ENCODE measurements at regions of chr2 and their contacts with region 1.

Region 1: GRCh38 chr2:157327621-157328500 is 2.2 kb upstream of the ERMN start:
- DNase-seq: peak; percentile 72
- H3K4me3 Mint-ChIP-seq: no peak overlapping the region
- H3K27ac Mint-ChIP-seq: no peak overlapping the region
- H3K4me1 Mint-ChIP-seq: peaks cover 31% of the 10 kb centered on the region
- H3K27me3 Mint-ChIP-seq: no peaks in the 10 kb centered on the region

Region 2: GRCh38 chr2:157363612-157364101 is 35.8 kb after region 1 on chr2:
- intact Hi-C with region 1: no loop called
- DNase-seq: no peak
- H3K4me3 Mint-ChIP-seq: no peak overlapping the region
- H3K27ac Mint-ChIP-seq: no peak overlapping the region
- H3K4me1 Mint-ChIP-seq: peaks cover 12% of the 10 kb centered on the region
- H3K27me3 Mint-ChIP-seq: no peaks in the 10 kb centered on the region

Region 3: GRCh38 chr2:157404363-157404762 is 76.5 kb after region 1 on chr2:
- intact Hi-C with region 1: loop called (anchors 2 kb)
- DNase-seq: peak; percentile 61
- H3K4me3 Mint-ChIP-seq: no peak overlapping the region
- H3K27ac Mint-ChIP-seq: peak overlapping the region; percentile 44
- H3K4me1 Mint-ChIP-seq: peaks cover 55% of the 10 kb centered on the region
- H3K27me3 Mint-ChIP-seq: no peaks in the 10 kb centered on the region

Region 4: GRCh38 chr2:157480182-157480961 is 152.5 kb after region 1 on chr2:
- intact Hi-C with region 1: loop called (anchors 5 kb)
- DNase-seq: no peak
- H3K4me3 Mint-ChIP-seq: peak overlapping the region; percentile 68
- H3K27ac Mint-ChIP-seq: peak overlapping the region; percentile 91
- H3K4me1 Mint-ChIP-seq: peaks cover 70% of the 10 kb centered on the region
- H3K27me3 Mint-ChIP-seq: no peaks in the 10 kb centered on the region

Region 5: GRCh38 chr2:157596992-157597681 is 269.3 kb after region 1 on chr2:
- intact Hi-C with region 1: loop called (anchors 2 kb)
- DNase-seq: peak; percentile 20
- H3K4me3 Mint-ChIP-seq: peak overlapping the region; percentile 39
- H3K27ac Mint-ChIP-seq: no peak overlapping the region
- H3K4me1 Mint-ChIP-seq: peaks cover 6% of the 10 kb centered on the region
- H3K27me3 Mint-ChIP-seq: peaks cover 47% of the 10 kb centered on the region